Right ventricle myocardium inferior (tissue), 1 donor: ENCODE measurements at regions of chr19 and their contacts with region 1.

Region 1: DNA sequence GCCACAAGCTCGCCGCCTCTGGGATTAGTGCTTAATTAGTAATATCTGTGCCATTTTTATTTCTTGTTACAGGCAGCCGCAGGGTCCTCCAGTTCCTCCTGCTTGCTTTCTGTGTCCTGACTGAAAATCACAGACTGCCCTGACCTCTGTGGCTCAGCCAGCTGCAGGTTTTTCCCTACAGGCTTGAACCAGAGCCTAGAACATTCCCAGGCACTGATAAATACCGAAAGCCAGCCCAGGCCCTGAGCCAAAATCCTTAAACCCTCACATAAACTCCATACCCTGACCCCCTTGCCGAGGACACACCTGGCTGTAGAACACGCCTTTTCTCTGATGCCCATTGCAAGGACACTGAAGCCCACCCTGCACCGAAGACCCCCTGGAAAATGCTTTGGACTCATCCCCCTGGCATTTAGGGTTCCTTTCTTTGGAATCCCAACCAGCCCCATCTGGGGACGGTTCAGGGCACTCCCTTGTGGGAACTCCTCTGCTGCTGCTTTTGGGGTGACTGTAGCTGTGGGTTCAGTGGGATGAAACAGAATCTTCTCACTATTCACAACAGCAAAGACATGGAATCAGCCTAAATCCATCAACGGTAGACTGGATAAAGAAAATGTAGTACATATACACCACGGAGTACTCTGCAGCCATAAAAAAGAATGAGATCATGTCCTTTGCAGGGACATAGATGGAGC is 15.5 kb downstream of the DPP9 start:
- DNase-seq: no peak
- ATAC-seq: peak; percentile 77

Region 2: GRCh38 chr19:4624733-4625362 is 83.3 kb before region 1 on chr19:
- intact Hi-C with region 1: no loop called
- DNase-seq: no peak
- ATAC-seq: no peak

Region 3: DNA sequence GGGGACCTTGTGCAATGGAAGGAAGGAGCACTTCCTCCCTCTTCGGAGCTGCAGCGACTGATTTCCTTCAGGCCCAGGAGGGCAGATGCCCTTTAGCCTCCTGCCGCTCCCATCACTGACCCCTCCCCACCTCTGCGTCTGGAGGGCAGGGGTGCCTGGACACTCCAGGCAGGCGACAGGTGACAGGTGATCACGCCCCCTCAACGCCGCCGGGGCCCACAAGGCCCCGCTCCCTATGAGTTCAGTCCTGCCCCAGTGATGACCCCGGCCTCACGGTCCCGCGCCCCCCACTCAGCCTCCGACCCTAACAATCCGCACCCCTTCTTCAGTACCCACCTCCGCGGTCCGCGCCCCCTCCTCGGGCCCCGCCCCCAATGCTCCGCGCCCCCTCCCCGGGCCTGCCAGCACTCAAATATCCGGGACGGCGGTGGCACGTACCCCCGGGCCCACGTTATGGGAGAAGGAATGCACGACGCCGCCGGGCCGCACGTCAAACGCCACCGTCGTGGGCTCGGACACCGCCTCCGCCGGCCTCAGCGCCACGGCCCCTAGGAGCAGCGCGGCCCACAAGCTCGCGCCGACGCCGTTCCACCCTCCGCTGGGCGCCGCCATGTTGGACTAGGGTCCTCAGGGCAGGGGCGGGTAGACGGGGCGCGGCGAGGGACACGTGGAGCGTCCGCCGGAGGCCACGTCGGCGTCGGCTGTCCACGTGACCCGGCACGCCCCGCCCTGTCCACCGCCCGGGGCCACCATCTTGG is 38.2 kb before region 1 on chr19 and contains the start of gene MYDGF:
- intact Hi-C with region 1: loop called (anchors 5 kb)
- DNase-seq: peak; percentile 98
- ATAC-seq: peak; percentile 99
- total RNA-seq, gene MYDGF: 29.8 TPM